ENCODE measurements at regions of chr15 and their contacts with region 1.

Region 1: GRCh38 chr15:69755551-69756310 is 303.1 kb downstream of the RPLP1 start:
- DNase-seq: peak; percentile 63
- ATAC-seq: peak; percentile 84
- H3K4me3 Mint-ChIP-seq: peak overlapping the region; percentile 71
- H3K27ac Mint-ChIP-seq: peak overlapping the region; percentile 89
- H3K4me1 Mint-ChIP-seq: peaks cover 72% of the 10 kb centered on the region
- H3K27me3 Mint-ChIP-seq: no peaks in the 10 kb centered on the region
- CTCF ChIP-seq: no peak

Region 2: GRCh38 chr15:69468241-69469121 is 287.2 kb before region 1 on chr15:
- CTCF ChIA-PET with region 1: no interaction called
- POLR2A ChIA-PET with region 1: no interaction called
- intact Hi-C with region 1: no loop called
- DNase-seq: no peak
- ATAC-seq: peak; percentile 74
- H3K4me3 Mint-ChIP-seq: peak overlapping the region; percentile 1
- H3K27ac Mint-ChIP-seq: no peak overlapping the region
- H3K4me1 Mint-ChIP-seq: peaks cover 8% of the 10 kb centered on the region
- H3K27me3 Mint-ChIP-seq: no peaks in the 10 kb centered on the region
- CTCF ChIP-seq: no peak

Region 3: DNA sequence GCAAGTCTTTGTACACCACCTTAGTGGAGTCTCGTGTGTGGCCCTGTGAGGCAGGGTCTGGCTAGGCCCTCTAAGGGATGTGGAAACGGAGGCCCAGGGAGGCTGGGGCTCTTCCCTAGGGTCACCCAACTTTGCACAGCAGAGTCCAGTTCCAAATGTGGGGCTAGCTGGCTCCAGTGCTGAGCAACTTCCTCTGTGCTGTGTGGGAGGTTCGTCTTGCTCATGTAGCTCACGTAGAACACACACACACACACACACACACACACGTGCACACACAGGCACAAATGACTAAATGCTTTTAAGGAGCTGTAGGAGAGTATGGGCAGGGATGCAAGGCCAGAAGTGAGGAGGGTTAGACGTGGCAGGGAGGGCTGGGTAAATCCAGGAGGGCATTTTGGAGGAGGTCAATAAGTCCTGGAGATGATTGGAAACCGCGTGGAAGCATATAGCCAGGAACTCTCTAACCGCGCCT is 89.3 kb before region 1 on chr15:
- CTCF ChIA-PET with region 1: no interaction called
- POLR2A ChIA-PET with region 1: interaction called, 6 read pairs
- intact Hi-C with region 1: loop called (anchors 2 kb)
- DNase-seq: no peak
- ATAC-seq: peak; percentile 51
- H3K4me3 Mint-ChIP-seq: peak overlapping the region; percentile 36
- H3K27ac Mint-ChIP-seq: peak overlapping the region; percentile 67
- H3K4me1 Mint-ChIP-seq: peaks cover 55% of the 10 kb centered on the region
- H3K27me3 Mint-ChIP-seq: peaks cover 6% of the 10 kb centered on the region
- CTCF ChIP-seq: no peak

Region 4: DNA sequence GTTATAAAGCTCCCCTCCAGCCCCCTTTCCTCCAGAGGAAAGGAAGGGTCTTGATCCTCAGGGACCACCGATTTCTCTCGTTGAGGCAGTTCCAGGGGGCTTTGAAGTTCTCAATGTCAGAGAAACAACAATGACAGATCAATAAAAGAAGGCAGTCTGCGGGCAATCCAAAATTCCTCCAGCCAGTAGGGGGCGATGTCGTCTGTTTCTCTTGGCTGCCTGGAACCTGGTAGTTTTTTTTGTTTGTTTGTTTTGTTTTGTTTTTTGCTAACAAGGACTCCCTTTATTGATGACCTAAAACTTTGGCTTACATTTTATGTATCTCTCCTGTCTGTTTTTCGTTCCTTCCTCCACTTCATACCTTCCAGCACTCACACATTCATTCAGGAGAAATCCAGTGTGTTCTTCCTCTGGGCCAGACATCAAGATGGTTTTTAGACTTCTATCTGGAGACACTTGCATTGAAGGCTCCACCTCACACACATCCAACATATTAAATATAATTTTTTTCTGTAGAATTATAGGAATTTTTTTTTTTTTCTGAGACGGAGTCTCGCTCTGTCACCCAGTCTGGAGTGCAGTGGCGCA is 26.5 kb before region 1 on chr15:
- CTCF ChIA-PET with region 1: interaction called, 6 read pairs
- POLR2A ChIA-PET with region 1: no interaction called
- intact Hi-C with region 1: loop called (anchors 1 kb)
- DNase-seq: peak; percentile 49
- ATAC-seq: no peak
- H3K4me3 Mint-ChIP-seq: no peak overlapping the region
- H3K27ac Mint-ChIP-seq: no peak overlapping the region
- H3K4me1 Mint-ChIP-seq: peaks cover 18% of the 10 kb centered on the region
- H3K27me3 Mint-ChIP-seq: peaks cover 3% of the 10 kb centered on the region
- CTCF ChIP-seq: peak; percentile 73

Region 5: GRCh38 chr15:69807755-69808154 is 52.0 kb after region 1 on chr15:
- CTCF ChIA-PET with region 1: no interaction called
- POLR2A ChIA-PET with region 1: no interaction called
- intact Hi-C with region 1: no loop called
- DNase-seq: no peak
- ATAC-seq: no peak
- H3K4me3 Mint-ChIP-seq: no peak overlapping the region
- H3K27ac Mint-ChIP-seq: no peak overlapping the region
- H3K4me1 Mint-ChIP-seq: peaks cover 8% of the 10 kb centered on the region
- H3K27me3 Mint-ChIP-seq: peaks cover 20% of the 10 kb centered on the region
- CTCF ChIP-seq: no peak

Region 6: GRCh38 chr15:70014860-70015490 is 259.2 kb after region 1 on chr15:
- CTCF ChIA-PET with region 1: no interaction called
- POLR2A ChIA-PET with region 1: no interaction called
- intact Hi-C with region 1: loop called (anchors 1 kb)
- DNase-seq: peak; percentile 50
- ATAC-seq: peak; percentile 70
- H3K4me3 Mint-ChIP-seq: peak overlapping the region; percentile 58
- H3K27ac Mint-ChIP-seq: peak overlapping the region; percentile 77
- H3K4me1 Mint-ChIP-seq: peaks cover 84% of the 10 kb centered on the region
- H3K27me3 Mint-ChIP-seq: no peaks in the 10 kb centered on the region
- CTCF ChIP-seq: no peak

Region 7: GRCh38 chr15:70196314-70197291 is 440.9 kb after region 1 on chr15:
- CTCF ChIA-PET with region 1: no interaction called
- POLR2A ChIA-PET with region 1: no interaction called
- intact Hi-C with region 1: loop called (anchors 2 kb)
- DNase-seq: peak; percentile 62
- ATAC-seq: peak; percentile 82
- H3K4me3 Mint-ChIP-seq: peak overlapping the region; percentile 55
- H3K27ac Mint-ChIP-seq: peak overlapping the region; percentile 79
- H3K4me1 Mint-ChIP-seq: peaks cover 58% of the 10 kb centered on the region
- H3K27me3 Mint-ChIP-seq: peaks cover 7% of the 10 kb centered on the region
- CTCF ChIP-seq: no peak

Region 8: DNA sequence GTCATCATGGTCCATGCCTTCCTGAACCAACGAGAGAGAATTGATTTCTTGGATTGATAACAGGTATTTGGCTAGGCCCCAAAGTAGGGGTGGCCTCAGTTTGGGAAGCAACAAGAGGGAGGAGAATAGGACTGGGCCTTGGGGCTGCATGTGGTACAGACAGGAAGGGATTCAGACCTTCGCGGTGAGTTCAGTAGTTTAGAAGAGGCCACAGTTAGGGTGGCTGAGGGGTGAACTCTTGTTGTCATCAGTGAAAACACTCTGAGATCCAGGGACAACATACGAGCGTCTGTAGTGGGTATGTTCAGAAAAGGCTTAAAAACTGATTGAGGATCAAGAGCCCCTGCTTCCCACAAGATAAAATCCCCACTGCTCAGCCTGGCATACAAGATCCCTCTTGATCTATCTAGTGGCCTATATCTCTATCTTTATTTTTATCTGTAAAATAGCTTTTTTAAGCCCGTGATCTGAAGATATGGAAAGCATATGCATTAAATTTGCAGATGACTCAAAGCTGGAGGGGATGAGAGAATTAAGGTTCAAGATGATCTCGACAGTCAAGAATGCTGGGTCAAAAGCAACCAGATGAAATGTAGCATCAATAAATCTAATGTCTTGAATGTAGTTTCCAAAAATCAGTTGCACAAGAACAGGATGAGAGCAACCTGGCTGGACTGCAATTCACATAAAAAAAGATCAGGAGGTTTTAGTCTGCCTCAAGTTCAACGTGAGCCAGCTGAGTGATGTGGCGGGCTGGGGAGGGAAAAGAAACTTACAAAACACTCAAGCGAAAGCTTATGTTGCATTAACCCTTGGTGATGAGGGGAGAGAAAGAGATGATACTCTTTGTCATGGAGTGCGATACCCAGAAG is 563.1 kb after region 1 on chr15:
- CTCF ChIA-PET with region 1: no interaction called
- POLR2A ChIA-PET with region 1: interaction called, 6 read pairs
- intact Hi-C with region 1: loop called (anchors 1 kb)
- DNase-seq: no peak
- ATAC-seq: peak; percentile 25
- H3K4me3 Mint-ChIP-seq: peak overlapping the region; percentile 72
- H3K27ac Mint-ChIP-seq: peak overlapping the region; percentile 85
- H3K4me1 Mint-ChIP-seq: peaks cover 57% of the 10 kb centered on the region
- H3K27me3 Mint-ChIP-seq: no peaks in the 10 kb centered on the region
- CTCF ChIP-seq: no peak

Region 9: DNA sequence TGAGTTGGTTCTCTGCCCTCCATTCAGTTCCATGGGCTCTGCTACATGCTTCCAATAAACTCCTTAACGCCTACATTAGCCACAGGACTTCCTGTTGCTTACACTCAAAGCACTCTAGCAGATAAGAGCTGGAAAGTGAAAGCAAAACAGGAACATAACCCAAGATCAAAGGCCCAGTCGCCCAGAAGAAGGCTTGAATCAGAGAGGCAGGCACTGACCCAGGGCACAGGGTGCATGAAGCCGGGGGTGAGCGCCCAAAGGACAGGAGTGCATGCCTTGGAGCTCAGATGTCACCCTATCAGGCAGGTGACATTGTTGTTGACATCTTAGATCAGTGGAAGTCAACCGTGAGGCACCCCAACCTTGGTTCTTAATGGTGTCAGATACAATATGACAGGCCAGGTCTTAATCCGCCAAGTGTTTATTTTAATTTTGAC is 772.6 kb after region 1 on chr15:
- CTCF ChIA-PET with region 1: no interaction called
- POLR2A ChIA-PET with region 1: no interaction called
- intact Hi-C with region 1: loop called (anchors 1 kb)
- DNase-seq: peak; percentile 30
- ATAC-seq: peak; percentile 72
- H3K4me3 Mint-ChIP-seq: peak overlapping the region; percentile 47
- H3K27ac Mint-ChIP-seq: peak overlapping the region; percentile 85
- H3K4me1 Mint-ChIP-seq: peaks cover 48% of the 10 kb centered on the region
- H3K27me3 Mint-ChIP-seq: no peaks in the 10 kb centered on the region
- CTCF ChIP-seq: no peak